Esophagus muscularis mucosa (tissue), 4 donors: ENCODE measurements at regions of chr2 and their contacts with region 1.

Region 1: GRCh38 chr2:54560146-54560881 is 104.2 kb downstream of the SPTBN1 start:
- DNase-seq: no peak
- H3K4me3 ChIP-seq: peak overlapping the region; percentile 54 to 62 (median 57)
- H3K27ac ChIP-seq: peak overlapping the region; percentile 83 to 92 (median 85)
- H3K4me1 ChIP-seq: peaks cover 72 to 91% (median 86%) of the 10 kb centered on the region in 4 donors
- H3K27me3 ChIP-seq: no peaks in the 10 kb centered on the region
- CTCF ChIP-seq: peak in 1 of 3 experiments; percentile 8
- EP300 ChIP-seq: no peak
- POLR2A ChIP-seq: no peak

Region 2: GRCh38 chr2:54599914-54600313 is 39.6 kb after region 1 on chr2:
- intact Hi-C with region 1: loop called (anchors 5 kb)
- DNase-seq: no peak
- H3K4me3 ChIP-seq: no peak overlapping the region
- H3K27ac ChIP-seq: peak overlapping the region; percentile 31 to 67 (median 58)
- H3K4me1 ChIP-seq: peaks cover 99 to 100% (median 100%) of the 10 kb centered on the region in 4 donors
- H3K27me3 ChIP-seq: no peaks in the 10 kb centered on the region
- CTCF ChIP-seq: no peak
- EP300 ChIP-seq: no peak
- POLR2A ChIP-seq: no peak

Region 3: DNA sequence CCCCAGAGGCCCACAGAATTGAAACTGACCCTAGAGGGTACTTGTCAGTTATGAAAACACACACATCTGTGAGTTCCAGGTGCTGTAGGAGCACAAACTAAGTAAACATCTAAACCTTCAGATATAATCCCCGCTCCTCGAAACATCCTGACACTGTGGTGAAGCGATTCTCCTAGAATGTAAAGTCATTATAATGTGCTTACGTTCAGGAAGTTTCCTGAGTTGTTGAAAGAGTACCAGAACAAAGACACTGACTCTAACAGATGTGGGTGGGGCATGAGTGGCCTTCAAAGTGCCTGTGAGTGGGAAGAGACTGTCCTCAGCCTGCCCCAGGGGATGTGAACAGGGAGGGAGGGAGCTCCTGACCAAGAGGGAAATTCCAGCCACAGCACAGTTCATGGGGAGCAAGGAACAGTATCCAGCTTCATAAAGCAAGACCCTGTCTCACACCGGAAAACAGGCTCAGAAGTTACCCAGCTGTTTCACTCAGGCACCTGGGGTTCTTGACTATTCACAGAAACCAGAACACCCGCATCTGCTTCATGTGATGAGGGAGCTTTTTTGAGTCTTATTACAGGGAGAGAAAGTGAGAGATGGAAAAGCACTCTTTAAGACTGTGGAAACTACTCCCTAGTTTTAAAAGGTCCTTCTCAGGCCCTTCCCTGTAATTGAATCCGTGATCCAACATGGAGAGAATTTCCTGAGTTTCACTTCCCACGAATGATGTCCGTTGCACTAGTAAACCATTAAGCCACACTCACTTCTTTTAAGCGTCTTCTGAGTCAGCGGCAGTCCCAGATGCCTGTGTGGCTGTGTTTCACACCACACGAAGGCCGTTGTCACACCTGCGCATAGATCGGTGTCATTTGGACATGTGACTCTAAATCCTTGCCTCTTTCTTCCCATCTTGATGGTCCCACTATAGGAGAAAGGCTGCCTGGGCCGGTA is 74.5 kb after region 1 on chr2:
- intact Hi-C with region 1: no loop called
- DNase-seq: no peak
- H3K4me3 ChIP-seq: peak overlapping the region in 2 of 4 donors; percentile 2 to 26
- H3K27ac ChIP-seq: peak overlapping the region; percentile 71 to 81 (median 74)
- H3K4me1 ChIP-seq: peaks cover 87 to 99% (median 95%) of the 10 kb centered on the region in 4 donors
- H3K27me3 ChIP-seq: no peaks in the 10 kb centered on the region
- CTCF ChIP-seq: no peak
- EP300 ChIP-seq: peak; percentile 1
- POLR2A ChIP-seq: no peak